Posterior vena cava (tissue), 2 donors: ENCODE measurements at regions of chr11 and their contacts with region 1.

Region 1: GRCh38 chr11:107770551-107770951 is 58.7 kb upstream of the SLN start:
- DNase-seq: no peak

Region 2: GRCh38 chr11:107565219-107565937 is 205.2 kb before region 1 on chr11 and contains the start of gene ALKBH8:
- intact Hi-C with region 1: loop called (anchors 5 to 10 kb)
- DNase-seq: peak; percentile 91
- total RNA-seq, gene ALKBH8: 10.3 to 10.7 TPM

Region 3: DNA sequence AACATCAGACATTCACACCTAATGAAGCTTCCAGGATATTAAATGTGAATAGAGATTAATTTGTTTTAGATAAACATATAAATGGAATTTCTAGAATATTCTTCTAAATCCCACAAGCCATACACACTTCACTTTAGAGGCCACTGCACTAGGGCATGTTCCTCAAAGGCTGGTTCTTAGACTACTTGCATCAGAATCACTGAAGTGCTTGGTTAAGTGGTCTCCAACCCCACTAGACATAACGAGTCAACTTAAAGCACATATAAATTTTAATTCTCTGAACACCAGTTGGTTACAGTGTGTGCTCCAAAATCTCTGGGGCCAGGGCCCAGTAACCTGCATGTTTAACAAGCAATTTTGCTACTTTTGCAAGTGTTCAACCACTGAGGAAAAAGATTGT is 197.1 kb before region 1 on chr11:
- intact Hi-C with region 1: loop called (anchors 5 to 10 kb)
- DNase-seq: no peak